Right ventricle myocardium inferior (tissue), 1 donor: ENCODE measurements at regions of chr21 and their contacts with region 1.

Region 1: DNA sequence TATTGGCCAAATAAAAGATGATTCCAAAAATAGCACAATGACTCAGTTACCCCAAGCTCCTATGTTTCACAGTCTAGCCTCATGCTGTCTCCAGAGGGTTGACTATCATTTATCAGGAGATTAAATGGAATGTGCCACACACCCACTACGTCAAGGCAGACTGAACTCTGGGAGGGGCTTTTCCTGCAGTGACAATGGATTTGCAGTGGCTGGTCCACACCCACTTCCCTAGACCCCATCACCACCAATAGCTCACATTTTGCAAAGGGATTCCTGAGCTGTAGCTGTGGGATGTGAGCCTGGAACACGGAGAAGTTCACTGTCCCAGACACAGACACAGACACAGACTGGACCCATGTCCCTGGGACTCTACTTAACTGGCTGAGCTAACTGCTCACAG is 77.1 kb downstream of the HLCS start:
- DNase-seq: no peak
- ATAC-seq: peak; percentile 44

Region 2: GRCh38 chr21:36551731-36552433 is 337.5 kb before region 1 on chr21:
- intact Hi-C with region 1: no loop called
- DNase-seq: no peak
- ATAC-seq: no peak

Region 3: GRCh38 chr21:36859744-36860501 is 29.5 kb before region 1 on chr21:
- intact Hi-C with region 1: loop called (anchors 2 kb)
- DNase-seq: peak; percentile 84
- ATAC-seq: peak; percentile 80

Region 4: DNA sequence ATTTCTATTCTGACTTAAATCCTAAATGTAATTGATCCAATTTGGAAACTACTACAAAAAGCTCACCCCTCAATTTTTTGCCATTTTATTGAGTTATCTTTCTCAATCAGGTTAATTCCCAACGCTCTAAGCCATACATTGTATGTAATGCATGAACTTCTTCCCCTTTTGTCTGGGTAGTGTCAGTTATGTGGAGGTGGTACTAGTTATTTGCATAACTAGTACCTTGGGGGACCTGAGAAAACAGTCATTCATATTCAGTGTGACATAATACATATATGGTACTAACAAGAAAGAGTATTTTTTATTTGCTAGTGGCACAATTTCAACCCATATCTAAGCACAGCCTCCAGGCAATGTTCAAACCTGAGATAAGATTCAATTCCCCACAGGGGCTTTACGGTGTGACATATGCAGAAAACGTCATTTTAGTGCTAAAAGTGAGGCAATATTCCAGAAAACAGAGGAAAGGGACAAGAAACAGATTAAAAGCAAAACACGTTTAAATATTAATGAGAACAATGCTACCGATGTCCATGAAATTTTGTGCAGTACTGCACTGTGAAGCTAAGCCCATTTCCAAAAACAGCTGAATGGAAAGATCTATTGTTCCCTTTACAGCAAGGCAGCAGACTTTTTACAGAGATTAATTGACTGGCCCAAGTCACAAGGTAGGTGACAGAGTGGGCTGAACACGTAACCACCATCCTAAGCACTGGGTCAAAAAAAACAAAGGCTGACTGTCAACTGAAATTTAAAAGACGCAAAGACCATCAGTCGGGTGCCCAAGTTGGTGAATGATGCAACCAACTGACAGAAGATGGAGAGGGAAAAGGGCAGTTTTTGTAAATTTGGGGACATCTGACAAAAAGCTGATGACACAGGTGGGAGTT is 75.7 kb after region 1 on chr21:
- intact Hi-C with region 1: no loop called
- DNase-seq: no peak
- ATAC-seq: no peak